Activated CD4-positive, alpha-beta T cell treated with anti-CD3 and anti-CD28 coated beads for 36 hours (primary cell): ENCODE measurements at regions of chr19 and their contacts with region 1.

Region 1: GRCh38 chr19:38374429-38375176 is at the start of gene PSMD8:
- DNase-seq: peak; percentile 99
- ATAC-seq: peak; percentile 99
- H3K4me3 Mint-ChIP-seq: peak within 1 kb of the TSS; percentile 97
- H3K27ac Mint-ChIP-seq: peak within 1 kb of the TSS; percentile 98
- H3K4me1 Mint-ChIP-seq: peaks cover 26% of the 10 kb centered on the region
- H3K27me3 Mint-ChIP-seq: peaks cover 5% of the 10 kb centered on the region
- total RNA-seq, gene PSMD8: 219 to 275 TPM

Region 2: GRCh38 chr19:38245826-38246498 is 128.6 kb before region 1 on chr19:
- CTCF ChIA-PET with region 1: interaction called, 6 read pairs
- POLR2A ChIA-PET with region 1: no interaction called
- intact Hi-C with region 1: loop called in 1 of 2 experiments (anchors 1 kb)
- DNase-seq: no peak
- ATAC-seq: no peak
- H3K4me3 Mint-ChIP-seq: no peak overlapping the region
- H3K27ac Mint-ChIP-seq: no peak overlapping the region
- H3K4me1 Mint-ChIP-seq: peaks cover 3% of the 10 kb centered on the region
- H3K27me3 Mint-ChIP-seq: peaks cover 2% of the 10 kb centered on the region

Region 3: GRCh38 chr19:38361633-38362075 is 12.9 kb before region 1 on chr19:
- CTCF ChIA-PET with region 1: interaction called, 7 read pairs
- POLR2A ChIA-PET with region 1: interaction called, 7 read pairs
- intact Hi-C with region 1: loop called in 1 of 2 experiments (anchors 1 kb)
- DNase-seq: peak; percentile 87
- ATAC-seq: peak; percentile 78
- H3K4me3 Mint-ChIP-seq: peak overlapping the region; percentile 76
- H3K27ac Mint-ChIP-seq: no peak overlapping the region
- H3K4me1 Mint-ChIP-seq: peaks cover 9% of the 10 kb centered on the region
- H3K27me3 Mint-ChIP-seq: peaks cover 22% of the 10 kb centered on the region

Region 4: DNA sequence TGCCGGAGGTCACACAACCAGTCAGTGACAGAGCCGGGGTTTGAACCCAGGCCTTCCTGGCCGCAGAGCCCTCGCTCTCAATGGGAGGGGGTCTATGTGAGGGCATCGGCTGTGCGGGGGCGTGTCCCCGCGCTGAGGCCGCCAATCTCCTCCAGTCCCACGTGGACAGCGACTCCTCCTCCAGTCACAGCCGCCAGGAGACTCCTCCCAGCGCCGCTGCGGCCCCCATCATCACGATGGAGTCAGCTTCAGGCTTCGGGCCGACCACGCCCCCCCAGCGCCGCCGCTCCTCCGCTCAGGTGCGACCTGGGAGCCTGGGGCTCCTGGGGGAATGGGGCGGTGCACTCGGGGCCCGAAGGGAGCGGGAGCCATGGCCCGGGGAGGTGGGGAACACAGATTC is 19.9 kb after region 1 on chr19:
- CTCF ChIA-PET with region 1: interaction called, 6 read pairs
- POLR2A ChIA-PET with region 1: interaction called, 3 read pairs
- intact Hi-C with region 1: loop called (anchors 1 to 2 kb)
- DNase-seq: peak; percentile 91
- ATAC-seq: peak; percentile 80
- H3K4me3 Mint-ChIP-seq: peak overlapping the region; percentile 76
- H3K27ac Mint-ChIP-seq: peak overlapping the region; percentile 66
- H3K4me1 Mint-ChIP-seq: peaks cover 29% of the 10 kb centered on the region
- H3K27me3 Mint-ChIP-seq: peaks cover 15% of the 10 kb centered on the region

Region 5: DNA sequence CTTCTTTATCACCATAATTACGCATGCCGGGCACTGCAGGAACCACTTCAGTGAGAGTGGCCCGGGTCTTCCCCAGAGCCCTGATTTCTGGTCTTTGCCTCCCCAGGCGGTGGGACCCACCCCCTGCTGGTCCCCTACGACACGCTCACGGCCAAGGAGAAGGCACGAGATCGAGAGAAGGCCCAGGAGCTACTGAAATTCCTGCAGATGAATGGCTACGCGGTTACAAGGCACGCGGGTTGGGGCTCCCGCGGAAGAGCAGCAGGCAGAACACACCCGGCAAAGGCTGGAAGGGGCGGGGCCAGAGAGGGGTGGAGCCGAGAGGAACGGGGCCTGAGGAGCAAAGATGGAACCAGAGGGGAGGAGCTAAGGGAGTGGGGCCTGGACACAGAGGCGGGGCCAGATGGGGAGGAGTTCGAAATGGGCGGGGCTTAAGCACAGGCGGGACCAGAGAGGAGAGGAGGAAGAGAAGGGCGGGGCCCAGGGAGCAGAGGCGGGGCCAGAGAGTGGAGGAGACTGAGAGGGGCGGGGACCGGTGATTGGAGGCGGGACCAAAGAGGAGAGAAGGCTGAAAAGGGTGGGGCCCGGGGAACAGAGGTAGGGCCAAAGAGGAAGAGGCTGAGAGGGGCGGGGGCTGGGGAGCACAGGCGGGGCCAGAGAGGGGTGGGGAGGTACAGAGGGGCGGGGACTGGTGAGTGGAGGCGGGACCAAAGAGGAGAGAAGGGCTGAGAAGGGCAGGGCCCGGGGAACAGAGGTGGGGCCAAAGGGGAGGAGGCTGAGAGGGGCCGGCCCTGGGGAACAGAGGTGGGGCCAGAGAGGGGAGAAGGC is 132.3 kb after region 1 on chr19:
- CTCF ChIA-PET with region 1: interaction called, 3 read pairs
- POLR2A ChIA-PET with region 1: interaction called, 4 read pairs
- intact Hi-C with region 1: loop called (anchors 1 kb)
- DNase-seq: peak; percentile 98
- ATAC-seq: peak; percentile 94
- H3K4me3 Mint-ChIP-seq: no peak overlapping the region
- H3K27ac Mint-ChIP-seq: no peak overlapping the region
- H3K4me1 Mint-ChIP-seq: peaks cover 6% of the 10 kb centered on the region
- H3K27me3 Mint-ChIP-seq: peaks cover 2% of the 10 kb centered on the region

Region 6: DNA sequence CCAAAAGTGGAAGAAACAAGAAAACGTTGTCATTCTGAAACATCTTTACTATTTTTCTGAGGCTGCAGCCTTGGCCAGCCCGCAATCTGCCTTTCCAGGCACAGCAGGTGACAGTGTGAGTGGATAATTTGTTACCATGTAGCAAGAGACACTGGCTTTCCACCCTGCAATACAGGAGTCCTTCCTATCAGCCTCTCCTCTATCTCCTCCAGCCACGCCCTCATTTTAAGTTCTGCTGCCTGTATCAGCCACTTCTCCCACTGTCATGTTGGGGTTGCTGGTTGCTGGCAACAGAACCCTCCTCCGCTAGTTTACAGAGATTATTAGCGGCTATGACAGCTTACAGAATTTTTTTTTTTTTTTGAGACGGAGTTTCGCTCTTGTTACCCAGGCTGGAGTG is 406.5 kb after region 1 on chr19:
- CTCF ChIA-PET with region 1: no interaction called
- POLR2A ChIA-PET with region 1: no interaction called
- intact Hi-C with region 1: no loop called
- DNase-seq: no peak
- ATAC-seq: no peak
- H3K4me3 Mint-ChIP-seq: no peak overlapping the region
- H3K27ac Mint-ChIP-seq: no peak overlapping the region
- H3K4me1 Mint-ChIP-seq: no peaks in the 10 kb centered on the region
- H3K27me3 Mint-ChIP-seq: no peaks in the 10 kb centered on the region